Activated T-helper 1 cell treated with anti-CD3 and anti-CD28 coated beads, Interleukin-12 subunit alpha, Interleukin-12 subunit beta, Interleukin-2, Interleukin-4 antibody, amounts not matched to agents 30 ng/mL and 10 ng/mL and 1 ng/mL, durations not matched to agents 14 hours and 24 hours and 36 hours (primary cell): ENCODE measurements at regions of chr1 and their contacts with region 1.

Region 1: DNA sequence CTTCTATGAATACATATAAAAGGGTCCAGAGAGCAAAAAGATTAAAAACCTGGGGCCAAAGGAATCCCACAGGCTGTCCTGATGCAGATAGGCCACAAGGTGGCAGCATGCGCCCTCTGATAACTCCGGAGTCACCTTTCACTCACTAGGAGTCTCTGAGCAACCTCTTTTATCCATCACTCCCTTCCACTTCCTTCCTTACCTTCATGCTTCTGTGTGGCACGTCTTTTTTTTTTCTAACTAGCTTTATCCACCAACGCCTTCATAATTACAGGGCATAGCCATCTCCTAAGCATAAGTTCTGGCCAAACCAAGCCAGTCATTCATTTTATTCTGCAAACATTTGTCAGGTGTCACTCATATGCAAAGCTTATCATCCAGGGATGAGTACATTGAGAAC is 3.9 kb upstream of the PGLYRP4 start:
- DNase-seq: peak; percentile 34
- H3K4me3 Mint-ChIP-seq: no peak overlapping the region
- H3K27ac Mint-ChIP-seq: no peak overlapping the region
- H3K4me1 Mint-ChIP-seq: peaks cover 15% of the 10 kb centered on the region
- H3K27me3 Mint-ChIP-seq: peaks cover 22% of the 10 kb centered on the region

Region 2: GRCh38 chr1:153404768-153405167 is 52.2 kb after region 1 on chr1:
- intact Hi-C with region 1: loop called (anchors 1 kb)
- DNase-seq: peak; percentile 33
- H3K4me3 Mint-ChIP-seq: no peak overlapping the region
- H3K27ac Mint-ChIP-seq: no peak overlapping the region
- H3K4me1 Mint-ChIP-seq: no peaks in the 10 kb centered on the region
- H3K27me3 Mint-ChIP-seq: peaks cover 25% of the 10 kb centered on the region

Region 3: DNA sequence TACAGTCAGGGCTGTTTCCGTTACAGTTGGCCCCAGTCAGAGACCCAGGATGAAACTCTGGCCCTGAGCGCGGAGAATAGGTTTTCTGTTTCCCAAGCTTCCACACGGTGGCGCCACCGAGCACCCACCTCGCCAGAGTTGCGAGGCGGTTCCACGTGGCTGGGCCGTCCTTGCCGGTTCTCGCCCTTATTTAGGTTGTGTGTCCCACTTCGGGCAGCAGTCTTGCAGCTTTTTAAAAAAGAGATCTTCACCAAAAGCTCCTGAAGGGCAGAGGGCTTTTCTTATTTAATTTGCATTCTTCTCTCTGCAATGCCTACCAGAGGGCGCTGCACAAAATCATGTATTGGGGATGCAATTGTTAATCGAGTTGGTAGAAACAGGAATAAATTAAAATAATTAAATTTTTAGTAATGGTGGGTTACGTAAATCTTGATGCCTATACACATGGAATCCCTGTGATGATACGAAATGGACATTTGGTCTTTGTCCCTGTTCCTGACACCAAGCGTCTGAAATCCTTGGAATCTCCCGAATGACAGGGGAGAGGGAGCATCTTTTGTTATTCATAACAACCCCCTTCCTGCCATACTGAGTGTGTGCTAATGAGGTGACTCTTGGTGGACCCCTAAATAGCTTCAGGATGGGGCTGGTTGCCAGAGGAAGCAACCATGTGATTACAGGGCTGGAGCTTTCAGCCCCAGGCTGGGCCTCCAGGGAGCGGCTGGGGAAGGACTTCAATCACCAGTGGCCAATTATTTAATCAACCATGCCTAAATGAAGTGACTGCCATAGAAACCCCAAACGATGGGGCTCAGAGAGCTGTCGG is 113.5 kb after region 1 on chr1:
- intact Hi-C with region 1: loop called (anchors 1 kb)
- DNase-seq: peak; percentile 42
- H3K4me3 Mint-ChIP-seq: no peak overlapping the region
- H3K27ac Mint-ChIP-seq: no peak overlapping the region
- H3K4me1 Mint-ChIP-seq: peaks cover 5% of the 10 kb centered on the region
- H3K27me3 Mint-ChIP-seq: peaks cover 26% of the 10 kb centered on the region

Region 4: DNA sequence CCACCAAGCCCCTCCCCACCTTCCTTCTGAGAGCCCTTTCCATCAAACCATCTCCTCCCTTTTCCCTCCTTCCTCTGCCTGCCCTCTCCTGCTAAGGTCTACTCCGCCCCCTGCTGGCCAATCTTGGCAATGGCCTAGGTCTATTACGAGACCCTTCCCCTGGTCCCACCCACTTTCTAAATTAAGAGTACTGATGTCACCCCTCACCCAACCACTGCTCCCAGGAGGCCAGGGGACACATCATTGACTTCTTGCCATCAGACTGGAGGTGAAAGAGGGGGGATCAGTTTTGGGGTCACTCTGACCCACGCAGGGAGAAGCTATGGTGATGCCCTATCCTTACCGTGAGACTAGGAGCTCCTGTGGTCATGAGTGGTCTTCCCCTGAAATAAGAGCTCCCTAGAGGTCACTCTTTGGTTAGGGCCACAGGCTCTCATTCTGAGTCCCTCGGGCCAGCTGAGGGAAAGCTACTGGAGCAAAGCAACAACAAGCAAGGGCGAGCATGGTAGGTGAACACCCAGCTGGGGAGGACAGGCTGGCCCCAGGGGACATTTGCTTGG is 142.5 kb after region 1 on chr1:
- intact Hi-C with region 1: loop called (anchors 1 kb)
- DNase-seq: peak; percentile 59
- H3K4me3 Mint-ChIP-seq: no peak overlapping the region
- H3K27ac Mint-ChIP-seq: no peak overlapping the region
- H3K4me1 Mint-ChIP-seq: no peaks in the 10 kb centered on the region
- H3K27me3 Mint-ChIP-seq: peaks cover 16% of the 10 kb centered on the region

Region 5: GRCh38 chr1:153617675-153618074 is 265.2 kb after region 1 on chr1:
- intact Hi-C with region 1: loop called (anchors 10 kb)
- DNase-seq: peak; percentile 63
- H3K4me3 Mint-ChIP-seq: no peak overlapping the region
- H3K27ac Mint-ChIP-seq: no peak overlapping the region
- H3K4me1 Mint-ChIP-seq: peaks cover 8% of the 10 kb centered on the region
- H3K27me3 Mint-ChIP-seq: no peaks in the 10 kb centered on the region

Region 6: DNA sequence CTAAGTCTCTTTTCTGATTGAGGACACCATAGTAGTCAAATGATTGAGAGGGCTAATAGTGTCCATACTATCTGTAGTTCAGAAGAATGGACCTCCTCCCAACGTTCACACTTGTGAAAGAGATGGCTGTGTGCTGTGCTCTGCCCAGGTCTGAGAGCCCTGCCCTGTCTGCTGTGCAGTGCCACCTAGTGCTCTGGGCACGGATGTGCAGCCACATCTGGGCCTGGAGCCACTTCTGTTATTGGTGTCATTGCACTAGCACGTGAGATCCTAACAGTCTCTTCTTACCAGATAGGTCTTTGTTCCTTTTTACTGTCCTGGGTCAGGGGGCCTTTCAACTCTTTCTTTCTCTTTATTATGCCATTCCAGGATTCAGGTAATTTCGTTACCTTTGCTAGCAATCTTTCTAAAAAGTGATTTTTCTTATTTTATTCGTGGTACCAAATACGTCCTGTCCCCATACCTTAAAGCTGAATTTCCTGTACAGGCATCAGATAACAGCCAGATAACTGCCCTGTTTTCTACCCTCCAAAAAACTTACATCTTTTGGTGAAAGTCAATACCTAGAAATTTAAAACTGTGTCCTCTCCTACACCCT is 397.0 kb after region 1 on chr1:
- intact Hi-C with region 1: loop called (anchors 10 kb)
- DNase-seq: peak; percentile 75
- H3K4me3 Mint-ChIP-seq: no peak overlapping the region
- H3K27ac Mint-ChIP-seq: no peak overlapping the region
- H3K4me1 Mint-ChIP-seq: peaks cover 7% of the 10 kb centered on the region
- H3K27me3 Mint-ChIP-seq: no peaks in the 10 kb centered on the region